ENCODE measurements at regions of chr16 and their contacts with region 1.

Region 1: GRCh38 chr16:54489225-54490111 is 202.9 kb upstream of the IRX3 start:
- DNase-seq: no peak
- ATAC-seq: peak; percentile 21 to 83 (median 52)
- H3K4me3 ChIP-seq: no peak overlapping the region
- H3K27ac ChIP-seq: peak overlapping the region in 9 of 12 donors; percentile 19 to 73 (median 50)
- H3K4me1 ChIP-seq: peaks cover 5 to 47% (median 19%) of the 10 kb centered on the region in 12 donors
- H3K27me3 ChIP-seq: no peaks in the 10 kb centered on the region
- CTCF ChIP-seq: no peak
- POLR2A ChIP-seq: no peak

Region 2: GRCh38 chr16:54422569-54422978 is 66.9 kb before region 1 on chr16:
- intact Hi-C with region 1: loop called in 3 of 10 experiments (anchors 5 to 10 kb)
- DNase-seq: no peak
- ATAC-seq: peak; percentile 29 to 49 (median 38)
- H3K4me3 ChIP-seq: no peak overlapping the region
- H3K27ac ChIP-seq: peak overlapping the region in 11 of 12 donors; percentile 41 to 82 (median 79)
- H3K4me1 ChIP-seq: peaks cover 0 to 26% (median 12%) of the 10 kb centered on the region in 12 donors
- H3K27me3 ChIP-seq: no peaks in the 10 kb centered on the region
- CTCF ChIP-seq: no peak
- POLR2A ChIP-seq: no peak

Region 3: DNA sequence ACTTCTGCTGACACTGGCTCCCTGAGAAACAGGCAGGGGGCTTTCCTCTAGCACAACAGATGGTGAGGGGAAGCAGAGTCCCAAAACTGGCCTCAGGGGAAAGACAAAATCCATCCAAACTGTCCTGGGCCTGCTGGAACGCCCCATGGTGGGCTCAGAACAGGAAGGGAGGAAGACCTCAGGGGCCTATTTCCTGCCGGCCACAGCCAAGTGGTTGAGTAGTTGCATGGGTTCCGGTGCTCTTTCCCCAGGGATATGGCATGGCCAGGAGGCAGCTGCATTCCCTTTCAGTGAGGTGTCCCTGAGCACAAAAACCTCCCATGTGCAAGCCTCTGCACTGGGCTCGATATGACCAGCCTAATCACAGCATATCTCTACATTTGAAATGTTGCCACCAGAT is 138.1 kb after region 1 on chr16:
- intact Hi-C with region 1: no loop called
- DNase-seq: no peak
- ATAC-seq: peak in 1 of 4 donors; percentile 18
- H3K4me3 ChIP-seq: no peak overlapping the region
- H3K27ac ChIP-seq: no peak overlapping the region
- H3K4me1 ChIP-seq: peaks cover 0 to 4% (median 0%) of the 10 kb centered on the region in 12 donors
- H3K27me3 ChIP-seq: no peaks in the 10 kb centered on the region
- CTCF ChIP-seq: no peak
- POLR2A ChIP-seq: no peak

Measured in heart left ventricle (tissue), 16 donors.